ENCODE measurements at regions of chr16 and their contacts with region 1.

Region 1: DNA sequence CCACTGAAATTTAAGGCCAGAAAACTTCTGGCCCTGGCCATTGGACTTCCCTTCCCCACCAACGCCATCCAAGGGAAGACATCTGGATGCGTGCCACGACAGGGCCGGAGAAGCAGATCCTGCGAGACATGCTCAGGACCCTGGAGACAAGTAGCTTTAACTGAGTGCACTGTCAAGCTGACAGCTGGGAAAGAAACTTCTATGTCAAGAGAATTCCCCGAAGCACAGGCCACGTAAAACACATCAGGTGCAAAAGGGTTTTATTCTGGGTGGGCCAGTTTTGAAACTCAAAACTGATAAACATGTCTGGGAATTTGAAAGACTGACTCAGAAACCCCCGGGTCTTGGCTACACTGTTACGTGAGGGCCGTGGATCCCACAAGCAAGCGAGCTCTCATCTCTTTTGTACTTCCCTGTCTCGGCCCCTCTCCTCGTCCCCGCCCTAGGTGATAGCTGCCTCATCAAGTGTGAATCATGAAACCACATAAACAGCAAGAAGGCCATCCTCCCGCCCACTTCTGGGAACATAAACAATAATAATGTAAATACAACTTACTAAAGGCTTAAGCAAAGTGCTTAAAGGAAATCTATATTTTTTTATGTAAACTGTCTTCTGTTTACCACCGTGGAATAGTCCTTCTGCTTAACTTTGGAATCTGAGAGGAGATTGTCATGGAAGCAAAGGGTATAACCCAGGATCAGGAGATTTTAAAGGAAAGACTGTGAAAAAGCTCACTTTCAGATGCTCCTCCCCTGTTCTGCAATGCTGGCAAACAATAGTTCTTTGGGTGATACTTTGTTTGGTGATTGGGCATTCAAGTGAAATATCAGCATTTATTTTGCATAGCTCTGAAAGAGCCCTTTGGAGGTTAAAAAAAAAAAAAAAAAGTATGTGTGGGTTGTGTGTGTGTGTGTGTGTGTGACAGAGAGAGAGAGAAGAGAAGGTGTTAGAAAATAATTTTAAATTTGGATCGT is 406.0 kb upstream of the MAF start:
- DNase-seq: peak; percentile 49
- H3K4me3 ChIP-seq: no peak overlapping the region
- H3K27ac ChIP-seq: no peak overlapping the region
- H3K4me1 ChIP-seq: peaks cover 8% of the 10 kb centered on the region
- H3K27me3 ChIP-seq: no peaks in the 10 kb centered on the region
- CTCF ChIP-seq: no peak

Region 2: GRCh38 chr16:79897453-79898146 is 108.9 kb before region 1 on chr16:
- CTCF ChIA-PET with region 1: interaction called, 8 read pairs
- dilution Hi-C with region 1: loop called (anchors 5 kb)
- in situ Hi-C with region 1: no loop called
- intact Hi-C with region 1: no loop called
- DNase-seq: no peak
- H3K4me3 ChIP-seq: no peak overlapping the region
- H3K27ac ChIP-seq: no peak overlapping the region
- H3K4me1 ChIP-seq: no peaks in the 10 kb centered on the region
- H3K27me3 ChIP-seq: no peaks in the 10 kb centered on the region
- CTCF ChIP-seq: no peak

Region 3: GRCh38 chr16:80433623-80434022 is 427.1 kb after region 1 on chr16:
- CTCF ChIA-PET with region 1: no interaction called
- dilution Hi-C with region 1: no loop called
- in situ Hi-C with region 1: no loop called
- intact Hi-C with region 1: no loop called
- DNase-seq: peak; percentile 79
- H3K4me3 ChIP-seq: no peak overlapping the region
- H3K27ac ChIP-seq: no peak overlapping the region
- H3K4me1 ChIP-seq: peaks cover 14% of the 10 kb centered on the region
- H3K27me3 ChIP-seq: no peaks in the 10 kb centered on the region
- CTCF ChIP-seq: no peak

Measured in mammary epithelial cell (primary cell).